ENCODE measurements at regions of chr3 and their contacts with region 1.

Region 1: GRCh38 chr3:31077021-31077601 is 182.7 kb upstream of the GADL1 start:
- DNase-seq: peak; percentile 68
- ATAC-seq: peak; percentile 98
- H3K4me3 Mint-ChIP-seq: no peak overlapping the region
- H3K27ac Mint-ChIP-seq: peak overlapping the region; percentile 52
- H3K4me1 Mint-ChIP-seq: peaks cover 26% of the 10 kb centered on the region
- H3K27me3 Mint-ChIP-seq: peaks cover 5% of the 10 kb centered on the region

Region 2: DNA sequence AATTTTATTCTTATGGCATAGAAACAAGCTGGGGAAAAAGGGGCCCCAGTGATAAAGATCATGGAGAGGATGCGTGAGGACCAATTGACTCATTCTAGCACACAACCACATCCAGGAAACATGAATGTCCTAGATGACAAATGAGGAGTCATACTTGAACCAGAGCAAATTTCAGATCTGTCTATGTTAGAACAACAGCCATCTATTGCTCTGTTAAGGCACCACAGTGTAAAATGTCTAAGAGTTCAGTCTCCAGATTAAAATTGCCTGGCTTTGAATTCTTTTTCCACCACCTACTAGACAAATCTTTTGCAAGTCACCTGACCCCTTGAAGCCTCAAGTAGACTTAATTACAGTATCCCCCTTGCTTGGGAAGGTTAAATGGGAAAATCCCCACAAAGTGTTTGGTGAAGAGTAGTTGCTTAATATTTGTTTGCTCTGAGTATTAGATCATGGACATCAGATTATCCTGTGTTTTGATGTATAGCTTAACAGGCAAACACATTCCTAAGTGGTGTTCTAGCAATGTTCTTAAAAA is 729.4 kb before region 1 on chr3:
- CTCF ChIA-PET with region 1: no interaction called
- POLR2A ChIA-PET with region 1: no interaction called
- intact Hi-C with region 1: loop called in 1 of 2 experiments (anchors 10 kb)
- DNase-seq: peak; percentile 67
- ATAC-seq: peak; percentile 97
- H3K4me3 Mint-ChIP-seq: no peak overlapping the region
- H3K27ac Mint-ChIP-seq: peak overlapping the region; percentile 82
- H3K4me1 Mint-ChIP-seq: peaks cover 85% of the 10 kb centered on the region
- H3K27me3 Mint-ChIP-seq: peaks cover 8% of the 10 kb centered on the region

Region 3: GRCh38 chr3:31105438-31106077 is 28.4 kb after region 1 on chr3:
- CTCF ChIA-PET with region 1: interaction called, 3 read pairs
- POLR2A ChIA-PET with region 1: interaction called, 5 read pairs
- intact Hi-C with region 1: loop called (anchors 1 kb)
- DNase-seq: peak; percentile 38
- ATAC-seq: peak; percentile 47
- H3K4me3 Mint-ChIP-seq: no peak overlapping the region
- H3K27ac Mint-ChIP-seq: no peak overlapping the region
- H3K4me1 Mint-ChIP-seq: peaks cover 40% of the 10 kb centered on the region
- H3K27me3 Mint-ChIP-seq: no peaks in the 10 kb centered on the region

Region 4: GRCh38 chr3:31247850-31248562 is 170.9 kb after region 1 on chr3:
- CTCF ChIA-PET with region 1: interaction called, 4 read pairs
- POLR2A ChIA-PET with region 1: no interaction called
- intact Hi-C with region 1: loop called (anchors 1 kb)
- DNase-seq: peak; percentile 52
- ATAC-seq: peak; percentile 21
- H3K4me3 Mint-ChIP-seq: no peak overlapping the region
- H3K27ac Mint-ChIP-seq: peak overlapping the region; percentile 51
- H3K4me1 Mint-ChIP-seq: peaks cover 53% of the 10 kb centered on the region
- H3K27me3 Mint-ChIP-seq: peaks cover 3% of the 10 kb centered on the region

Region 5: GRCh38 chr3:31356941-31357340 is 279.8 kb after region 1 on chr3:
- CTCF ChIA-PET with region 1: no interaction called
- POLR2A ChIA-PET with region 1: no interaction called
- intact Hi-C with region 1: no loop called
- DNase-seq: peak; percentile 23
- ATAC-seq: peak; percentile 17
- H3K4me3 Mint-ChIP-seq: no peak overlapping the region
- H3K27ac Mint-ChIP-seq: no peak overlapping the region
- H3K4me1 Mint-ChIP-seq: peaks cover 17% of the 10 kb centered on the region
- H3K27me3 Mint-ChIP-seq: no peaks in the 10 kb centered on the region

Region 6: DNA sequence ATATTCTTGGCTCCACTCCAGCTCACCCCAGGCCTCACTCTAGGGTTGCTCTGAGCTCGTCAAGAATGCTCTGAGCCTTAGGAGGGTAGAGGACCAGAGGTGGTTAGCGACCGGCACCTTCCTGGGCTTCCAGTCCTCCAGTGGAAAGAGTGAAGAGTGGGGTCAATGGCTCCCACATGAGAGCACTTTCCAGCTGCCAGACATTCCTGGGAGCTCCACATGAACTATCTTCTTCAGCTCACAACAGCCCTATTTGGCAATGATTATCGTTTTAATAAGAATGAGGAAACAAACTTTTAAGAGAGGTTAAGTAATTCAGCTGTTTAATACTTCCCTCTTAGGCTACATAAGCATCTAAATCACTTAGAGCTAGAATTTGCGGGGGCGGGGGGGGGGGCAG is 594.9 kb after region 1 on chr3:
- CTCF ChIA-PET with region 1: no interaction called
- POLR2A ChIA-PET with region 1: no interaction called
- intact Hi-C with region 1: no loop called
- DNase-seq: no peak
- ATAC-seq: no peak
- H3K4me3 Mint-ChIP-seq: no peak overlapping the region
- H3K27ac Mint-ChIP-seq: no peak overlapping the region
- H3K4me1 Mint-ChIP-seq: peaks cover 4% of the 10 kb centered on the region
- H3K27me3 Mint-ChIP-seq: no peaks in the 10 kb centered on the region

Measured in activated CD4-positive, alpha-beta T cell treated with anti-CD3 and anti-CD28 coated beads for 36 hours (primary cell).